HepG2 (cell line): ENCODE measurements at regions of chr2 and their contacts with region 1.

Region 1: GRCh38 chr2:63819765-63820717 is 21.7 kb upstream of the UGP2 start:
- DNase-seq: peak; percentile 92
- ATAC-seq: peak; percentile 99
- H3K4me3 ChIP-seq: peak overlapping the region in 1 of 3 experiments; percentile 10; a peak in 1 of 6 replicates
- H3K27ac ChIP-seq: peak overlapping the region; percentile 66
- H3K4me1 ChIP-seq: peaks cover 44% of the 10 kb centered on the region
- H3K27me3 ChIP-seq: no peaks in the 10 kb centered on the region
- CTCF ChIP-seq: 0 out of 2 replicates have a peak, but pooled peaks have one; percentile 11
- EP300 ChIP-seq: peak in 1 of 2 experiments; percentile 95; a peak in 2 of 4 replicates
- POLR2A ChIP-seq: no peak
- RAD21 ChIP-seq: 0 out of 2 replicates have a peak, but pooled peaks have one; percentile 8

Region 2: GRCh38 chr2:63801455-63801854 is 18.6 kb before region 1 on chr2:
- CTCF ChIA-PET with region 1: no interaction called
- POLR2A ChIA-PET with region 1: no interaction called
- in situ Hi-C with region 1: no loop called
- intact Hi-C with region 1: loop called (anchors 1 kb)
- DNase-seq: no peak
- ATAC-seq: no peak
- H3K4me3 ChIP-seq: no peak overlapping the region
- H3K27ac ChIP-seq: no peak overlapping the region
- H3K4me1 ChIP-seq: no peaks in the 10 kb centered on the region
- H3K27me3 ChIP-seq: no peaks in the 10 kb centered on the region
- CTCF ChIP-seq: no peak
- EP300 ChIP-seq: no peak
- POLR2A ChIP-seq: no peak
- RAD21 ChIP-seq: no peak